ENCODE measurements at regions of chr19 and their contacts with region 1.

Region 1: GRCh38 chr19:35222373-35223015 is 6.0 kb downstream of the FAM187B start:
- DNase-seq: peak in 1 of 35 experiments; percentile 10
- ATAC-seq: no peak
- H3K4me3 ChIP-seq: no peak overlapping the region
- H3K4me3 Mint-ChIP-seq: no peak overlapping the region
- H3K27ac ChIP-seq: no peak overlapping the region
- H3K27ac Mint-ChIP-seq: peak overlapping the region; percentile 31 to 59
- H3K4me1 ChIP-seq: peaks cover 0 to 33% of the 10 kb centered on the region in 2 experiments
- H3K4me1 Mint-ChIP-seq: peaks cover 18 to 50% (median 41%) of the 10 kb centered on the region in 3 donors
- H3K27me3 ChIP-seq: no peaks in the 10 kb centered on the region
- H3K27me3 Mint-ChIP-seq: no peaks in the 10 kb centered on the region

Region 2: DNA sequence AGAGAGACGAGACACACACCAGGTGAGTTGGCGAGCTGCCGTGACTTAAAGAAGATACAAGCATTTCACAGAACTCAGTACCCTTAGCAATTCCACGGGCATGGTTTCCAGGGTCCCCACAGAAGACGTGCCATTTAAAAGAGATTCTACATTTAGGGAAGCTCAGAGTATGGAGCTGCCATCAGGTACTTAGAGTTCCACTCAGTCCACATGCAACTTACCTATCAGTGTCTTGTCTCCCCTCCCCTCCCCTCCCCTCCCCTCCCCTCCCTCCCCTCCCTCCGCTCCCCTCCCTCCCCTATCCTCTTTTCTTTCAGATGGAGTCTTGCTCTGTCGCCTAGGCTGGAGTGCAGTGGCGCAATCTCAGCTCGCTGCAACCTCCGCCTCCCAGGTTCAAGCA is 283.6 kb before region 1 on chr19:
- CTCF ChIA-PET with region 1: no interaction called
- POLR2A ChIA-PET with region 1: no interaction called
- DNase-seq: no peak
- ATAC-seq: no peak
- H3K4me3 ChIP-seq: no peak overlapping the region
- H3K4me3 Mint-ChIP-seq: no peak overlapping the region
- H3K27ac ChIP-seq: no peak overlapping the region
- H3K27ac Mint-ChIP-seq: no peak overlapping the region
- H3K4me1 ChIP-seq: no peaks in the 10 kb centered on the region
- H3K4me1 Mint-ChIP-seq: no peaks in the 10 kb centered on the region
- H3K27me3 ChIP-seq: no peaks in the 10 kb centered on the region
- H3K27me3 Mint-ChIP-seq: no peaks in the 10 kb centered on the region

Region 3: GRCh38 chr19:35044317-35045117 is 178.0 kb before region 1 on chr19:
- CTCF ChIA-PET with region 1: interaction called in 1 of 2 experiments, 10 read pairs
- POLR2A ChIA-PET with region 1: no interaction called
- DNase-seq: peak in 26 of 35 experiments; percentile 37 to 75 (median 50)
- ATAC-seq: no peak
- H3K4me3 ChIP-seq: no peak overlapping the region
- H3K4me3 Mint-ChIP-seq: peak overlapping the region in 1 of 3 donors; percentile 26
- H3K27ac ChIP-seq: no peak overlapping the region
- H3K27ac Mint-ChIP-seq: peak overlapping the region in 1 of 2 donors; percentile 69
- H3K4me1 ChIP-seq: peaks cover 3 to 45% of the 10 kb centered on the region in 2 experiments
- H3K4me1 Mint-ChIP-seq: peaks cover 23 to 59% (median 43%) of the 10 kb centered on the region in 3 donors
- H3K27me3 ChIP-seq: peaks cover 0 to 48% of the 10 kb centered on the region in 2 experiments
- H3K27me3 Mint-ChIP-seq: peaks cover 0 to 17% of the 10 kb centered on the region in 2 donors

Region 4: DNA sequence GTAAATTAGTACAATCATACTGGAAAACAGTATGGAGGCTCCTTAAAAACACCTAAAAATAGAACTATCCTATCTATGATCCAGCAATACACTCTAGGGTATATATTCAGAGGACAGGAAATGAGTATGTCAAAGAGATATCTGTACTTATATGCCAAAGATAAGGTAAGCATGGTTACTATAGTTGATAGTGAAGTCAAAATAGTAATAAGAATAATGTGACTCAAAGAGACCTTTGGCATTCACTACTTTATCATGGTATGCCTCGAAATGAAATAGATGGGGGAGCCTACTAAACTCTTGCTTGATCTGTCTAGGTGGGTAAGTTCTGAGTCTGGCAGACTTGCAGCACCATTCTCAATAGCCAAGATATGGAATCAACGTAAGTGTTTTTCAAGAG is 37.6 kb before region 1 on chr19:
- CTCF ChIA-PET with region 1: no interaction called
- POLR2A ChIA-PET with region 1: no interaction called
- DNase-seq: no peak
- ATAC-seq: no peak
- H3K4me3 ChIP-seq: no peak overlapping the region
- H3K4me3 Mint-ChIP-seq: no peak overlapping the region
- H3K27ac ChIP-seq: no peak overlapping the region
- H3K27ac Mint-ChIP-seq: peak overlapping the region in 1 of 2 donors; percentile 11
- H3K4me1 ChIP-seq: peaks cover 4 to 7% of the 10 kb centered on the region in 2 experiments
- H3K4me1 Mint-ChIP-seq: peaks cover 8 to 28% (median 22%) of the 10 kb centered on the region in 3 donors
- H3K27me3 ChIP-seq: no peaks in the 10 kb centered on the region
- H3K27me3 Mint-ChIP-seq: no peaks in the 10 kb centered on the region